PC-3 (cell line): ENCODE measurements at regions of chr4 and their contacts with region 1.

Region 1: DNA sequence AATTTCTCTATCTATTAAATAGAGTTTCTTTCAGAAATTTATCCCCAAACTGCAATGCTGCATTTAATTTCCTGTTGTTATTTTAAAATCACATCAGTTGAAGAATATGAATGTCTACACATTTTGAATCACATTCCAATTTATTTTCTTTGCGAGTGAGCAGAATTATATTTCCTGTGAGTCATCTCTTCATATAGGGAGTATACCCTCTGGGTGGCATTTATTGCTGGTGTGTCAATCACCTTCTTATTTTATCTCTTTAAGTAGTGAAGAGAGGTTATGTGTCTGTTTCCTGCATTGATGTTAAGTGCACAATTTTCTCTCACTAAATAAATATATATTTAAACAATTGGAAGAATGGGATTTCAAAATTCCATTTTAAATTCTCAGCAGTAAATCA is 511.0 kb upstream of the ATOH1 start:
- DNase-seq: peak; percentile 70
- ATAC-seq: peak; percentile 94
- H3K4me3 ChIP-seq: no peak overlapping the region
- H3K27ac ChIP-seq: no peak overlapping the region
- H3K4me1 ChIP-seq: peaks cover 21% of the 10 kb centered on the region; the same call in 1 of the 2 replicates
- H3K27me3 ChIP-seq: no peaks in the 10 kb centered on the region
- CTCF ChIP-seq: no peak

Region 2: DNA sequence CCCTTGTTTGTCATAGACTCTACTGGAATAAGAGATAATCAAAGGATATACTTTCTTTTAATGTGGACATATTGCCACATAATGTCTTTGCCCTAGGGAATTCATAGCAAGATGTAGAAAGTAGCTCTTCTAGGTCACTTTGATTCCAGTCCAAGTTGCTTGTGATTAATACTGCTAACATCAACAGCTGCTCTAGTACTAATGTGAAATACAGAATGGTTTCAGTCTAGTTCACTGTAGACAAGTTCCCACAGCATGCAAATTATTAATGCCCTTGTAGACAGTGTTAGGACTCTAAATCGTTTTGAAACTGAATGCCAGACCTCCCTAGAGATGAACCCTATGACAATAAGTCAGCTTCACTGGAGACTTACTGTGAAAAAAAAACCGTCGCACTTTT is 16.4 kb after region 1 on chr4:
- CTCF ChIA-PET with region 1: no interaction called
- POLR2A ChIA-PET with region 1: no interaction called
- intact Hi-C with region 1: no loop called
- DNase-seq: no peak
- ATAC-seq: no peak
- H3K4me3 ChIP-seq: no peak overlapping the region
- H3K27ac ChIP-seq: no peak overlapping the region
- H3K4me1 ChIP-seq: no peaks in the 10 kb centered on the region
- H3K27me3 ChIP-seq: no peaks in the 10 kb centered on the region
- CTCF ChIP-seq: no peak

Region 3: GRCh38 chr4:93475730-93476129 is 158.2 kb after region 1 on chr4:
- CTCF ChIA-PET with region 1: no interaction called
- POLR2A ChIA-PET with region 1: no interaction called
- intact Hi-C with region 1: loop called (anchors 5 kb)
- DNase-seq: peak; percentile 72
- ATAC-seq: peak; percentile 67
- H3K4me3 ChIP-seq: no peak overlapping the region
- H3K27ac ChIP-seq: peak overlapping the region; percentile 83
- H3K4me1 ChIP-seq: peaks cover 45% of the 10 kb centered on the region
- H3K27me3 ChIP-seq: no peaks in the 10 kb centered on the region
- CTCF ChIP-seq: no peak